ENCODE measurements at regions of chr11 and their contacts with region 1.

Region 1: GRCh38 chr11:75233742-75234172 is 6.8 kb upstream of the TPBGL start:
- DNase-seq: peak; percentile 50
- H3K4me3 ChIP-seq: no peak overlapping the region
- H3K27ac ChIP-seq: no peak overlapping the region
- H3K4me1 ChIP-seq: no peaks in the 10 kb centered on the region
- H3K27me3 ChIP-seq: peaks cover 1 to 3% of the 10 kb centered on the region in 2 experiments
- CTCF ChIP-seq: no peak
- POLR2A ChIP-seq: no peak

Region 2: GRCh38 chr11:75214411-75214821 is 19.3 kb before region 1 on chr11:
- CTCF ChIA-PET with region 1: interaction called, 11 read pairs
- POLR2A ChIA-PET with region 1: no interaction called
- dilution Hi-C with region 1: no loop called
- intact Hi-C with region 1: loop called (anchors 1 kb)
- DNase-seq: peak; percentile 73
- H3K4me3 ChIP-seq: no peak overlapping the region
- H3K27ac ChIP-seq: no peak overlapping the region
- H3K4me1 ChIP-seq: no peaks in the 10 kb centered on the region
- H3K27me3 ChIP-seq: peaks cover under 1 to 1% of the 10 kb centered on the region in 2 experiments
- CTCF ChIP-seq: peak; percentile 48 to 63
- POLR2A ChIP-seq: no peak

Region 3: GRCh38 chr11:75301601-75302345 is 68.0 kb after region 1 on chr11:
- CTCF ChIA-PET with region 1: no interaction called
- POLR2A ChIA-PET with region 1: no interaction called
- dilution Hi-C with region 1: no loop called
- intact Hi-C with region 1: no loop called
- DNase-seq: peak; percentile 46
- H3K4me3 ChIP-seq: no peak overlapping the region
- H3K27ac ChIP-seq: no peak overlapping the region
- H3K4me1 ChIP-seq: peaks cover 19% of the 10 kb centered on the region
- H3K27me3 ChIP-seq: no peaks in the 10 kb centered on the region
- CTCF ChIP-seq: no peak
- POLR2A ChIP-seq: no peak